ENCODE measurements at regions of chr17 and their contacts with region 1.

Region 1: GRCh38 chr17:17171991-17172939 is 33.9 kb downstream of the PLD6 start:
- DNase-seq: no peak
- H3K4me3 Mint-ChIP-seq: no peak overlapping the region
- H3K27ac Mint-ChIP-seq: peak overlapping the region; percentile 83
- H3K4me1 Mint-ChIP-seq: peaks cover 69% of the 10 kb centered on the region
- H3K27me3 Mint-ChIP-seq: no peaks in the 10 kb centered on the region

Region 2: DNA sequence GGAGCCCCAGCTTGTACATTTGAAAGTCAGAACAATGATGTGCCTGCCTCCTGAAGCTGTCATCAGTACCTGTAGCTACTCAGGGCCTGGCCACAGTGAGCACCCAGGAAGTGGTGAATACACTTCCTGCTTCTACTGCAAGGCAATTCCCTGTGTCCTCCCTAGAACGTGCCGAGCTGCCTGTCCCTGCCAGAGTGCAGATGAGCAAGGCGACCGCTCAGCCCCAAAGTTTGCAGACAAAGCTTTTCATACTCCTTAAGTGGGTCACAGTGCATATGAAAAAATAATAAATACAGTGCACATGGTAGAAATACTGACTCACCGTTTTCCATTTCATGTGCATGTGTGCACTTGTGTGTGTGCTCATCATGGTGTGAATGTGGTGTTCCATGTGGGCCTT is 52.7 kb before region 1 on chr17:
- CTCF ChIA-PET with region 1: no interaction called
- POLR2A ChIA-PET with region 1: no interaction called
- DNase-seq: peak; percentile 78
- H3K4me3 Mint-ChIP-seq: no peak overlapping the region
- H3K27ac Mint-ChIP-seq: peak overlapping the region; percentile 93
- H3K4me1 Mint-ChIP-seq: peaks cover 77% of the 10 kb centered on the region
- H3K27me3 Mint-ChIP-seq: no peaks in the 10 kb centered on the region

Region 3: DNA sequence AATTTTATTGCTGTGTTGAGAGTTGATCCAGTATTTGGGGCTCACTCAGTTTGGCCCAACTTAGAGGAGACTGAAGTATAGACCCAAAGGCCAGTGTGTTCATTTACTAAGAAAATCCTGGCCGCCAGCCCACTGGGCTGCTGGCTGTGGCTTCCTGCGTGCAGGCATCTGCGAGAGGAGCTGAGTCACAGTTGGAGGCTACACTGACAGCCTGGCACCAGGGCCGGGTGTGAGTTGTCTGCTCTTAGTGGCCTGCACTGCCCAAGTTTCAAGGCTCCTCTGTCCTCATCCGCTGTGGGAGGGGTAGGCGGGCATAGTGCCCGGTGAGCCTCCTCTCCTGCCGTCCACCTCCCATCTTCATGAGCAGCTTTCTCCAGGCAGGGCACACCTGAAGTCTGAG is 20.3 kb before region 1 on chr17:
- CTCF ChIA-PET with region 1: interaction called, 4 read pairs
- POLR2A ChIA-PET with region 1: interaction called, 15 read pairs
- DNase-seq: peak; percentile 45
- H3K4me3 Mint-ChIP-seq: no peak overlapping the region
- H3K27ac Mint-ChIP-seq: peak overlapping the region; percentile 59
- H3K4me1 Mint-ChIP-seq: peaks cover 61% of the 10 kb centered on the region
- H3K27me3 Mint-ChIP-seq: no peaks in the 10 kb centered on the region

Region 4: DNA sequence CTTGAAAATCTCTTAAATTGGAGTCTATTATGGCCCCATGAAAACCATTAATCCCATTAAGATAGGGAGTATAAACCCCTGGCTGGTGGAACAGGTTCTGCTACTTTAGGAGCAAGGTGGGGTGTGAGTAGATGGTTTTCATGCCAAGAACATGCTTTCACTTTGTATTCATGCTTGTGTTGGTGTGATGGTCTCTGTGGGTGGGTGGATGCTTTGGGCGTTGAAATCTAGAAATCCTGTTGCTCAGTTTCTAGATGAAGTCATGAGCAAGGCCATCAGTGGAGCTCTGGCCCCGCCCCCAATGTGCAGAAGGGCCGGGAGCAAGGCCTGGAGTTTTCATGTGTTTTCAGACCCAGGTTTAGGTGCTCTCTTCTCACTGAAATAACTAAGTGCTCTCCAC is 13.8 kb after region 1 on chr17:
- CTCF ChIA-PET with region 1: interaction called, 5 read pairs
- POLR2A ChIA-PET with region 1: interaction called, 38 read pairs
- DNase-seq: peak; percentile 66
- H3K4me3 Mint-ChIP-seq: peak overlapping the region; percentile 28
- H3K27ac Mint-ChIP-seq: peak overlapping the region; percentile 86
- H3K4me1 Mint-ChIP-seq: peaks cover 64% of the 10 kb centered on the region
- H3K27me3 Mint-ChIP-seq: no peaks in the 10 kb centered on the region

Region 5: DNA sequence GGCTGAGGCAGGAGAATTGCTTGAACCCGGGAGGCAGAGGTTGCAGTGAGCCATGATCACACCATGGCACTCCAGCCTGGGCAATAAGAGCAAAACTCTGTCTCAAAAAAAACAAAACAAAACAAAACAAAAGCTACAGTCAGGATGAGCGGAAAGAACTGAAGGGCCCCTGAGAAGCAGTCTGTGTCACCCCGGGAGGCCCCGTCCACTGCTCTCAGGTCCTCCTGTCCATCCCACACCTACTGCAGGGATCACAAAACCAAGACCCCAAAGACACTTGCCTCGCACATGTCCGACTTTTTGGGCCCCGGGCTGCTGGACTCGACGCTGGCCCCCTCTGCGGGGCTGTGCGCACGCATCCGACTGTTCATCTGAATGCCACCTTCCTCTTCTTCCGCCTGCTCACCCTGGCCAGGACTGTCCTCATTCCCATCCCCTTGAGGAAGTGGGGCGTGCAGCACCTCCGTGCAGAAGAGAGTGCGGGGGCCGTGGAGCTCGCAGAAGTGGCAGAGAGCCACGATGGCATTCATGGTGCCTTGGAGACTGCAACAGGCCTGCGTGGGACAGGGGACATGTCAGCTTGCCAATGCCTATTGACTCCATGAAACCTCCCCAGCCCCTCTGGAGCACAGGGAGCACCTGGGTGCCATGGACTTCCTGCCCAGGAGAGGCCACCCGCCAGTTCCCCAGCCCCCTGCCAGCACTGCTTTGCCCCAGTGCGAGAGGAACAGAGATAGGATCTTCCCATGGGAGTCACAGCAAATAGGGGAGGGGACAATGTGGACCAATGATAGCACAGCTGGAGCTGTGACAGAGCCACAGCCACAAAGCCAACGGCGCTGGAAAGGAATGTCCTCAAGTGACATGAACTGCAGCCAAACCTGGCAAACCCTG is 55.6 kb after region 1 on chr17:
- CTCF ChIA-PET with region 1: no interaction called
- POLR2A ChIA-PET with region 1: no interaction called
- DNase-seq: no peak
- H3K4me3 Mint-ChIP-seq: no peak overlapping the region
- H3K27ac Mint-ChIP-seq: no peak overlapping the region
- H3K4me1 Mint-ChIP-seq: no peaks in the 10 kb centered on the region
- H3K27me3 Mint-ChIP-seq: no peaks in the 10 kb centered on the region

Region 6: GRCh38 chr17:17484451-17484899 is 312.2 kb after region 1 on chr17:
- CTCF ChIA-PET with region 1: no interaction called
- POLR2A ChIA-PET with region 1: no interaction called
- DNase-seq: no peak
- H3K4me3 Mint-ChIP-seq: no peak overlapping the region
- H3K27ac Mint-ChIP-seq: peak overlapping the region; percentile 3
- H3K4me1 Mint-ChIP-seq: peaks cover 42% of the 10 kb centered on the region
- H3K27me3 Mint-ChIP-seq: no peaks in the 10 kb centered on the region